ENCODE measurements at regions of chr7 and their contacts with region 1.

Region 1: GRCh38 chr7:7681179-7681935 is 37.0 kb downstream of the RPA3 start:
- DNase-seq: peak in 1 of 2 experiments; percentile 55
- H3K4me3 ChIP-seq: no peak overlapping the region
- H3K4me3 Mint-ChIP-seq: no peak overlapping the region
- H3K27ac Mint-ChIP-seq: no peak overlapping the region
- H3K4me1 ChIP-seq: no peaks in the 10 kb centered on the region
- H3K4me1 Mint-ChIP-seq: no peaks in the 10 kb centered on the region
- H3K27me3 ChIP-seq: no peaks in the 10 kb centered on the region
- H3K27me3 Mint-ChIP-seq: no peaks in the 10 kb centered on the region
- CTCF ChIP-seq: peak; percentile 50 to 62

Region 2: GRCh38 chr7:7595451-7595850 is 85.9 kb before region 1 on chr7:
- CTCF ChIA-PET with region 1: no interaction called
- POLR2A ChIA-PET with region 1: no interaction called
- intact Hi-C with region 1: no loop called
- DNase-seq: no peak
- H3K4me3 ChIP-seq: no peak overlapping the region
- H3K4me3 Mint-ChIP-seq: no peak overlapping the region
- H3K27ac Mint-ChIP-seq: no peak overlapping the region
- H3K4me1 ChIP-seq: no peaks in the 10 kb centered on the region
- H3K4me1 Mint-ChIP-seq: no peaks in the 10 kb centered on the region
- H3K27me3 ChIP-seq: no peaks in the 10 kb centered on the region
- H3K27me3 Mint-ChIP-seq: no peaks in the 10 kb centered on the region
- CTCF ChIP-seq: peak in 1 of 2 experiments; percentile 7

Region 3: GRCh38 chr7:7696458-7697119 is 15.2 kb after region 1 on chr7:
- CTCF ChIA-PET with region 1: no interaction called
- POLR2A ChIA-PET with region 1: no interaction called
- intact Hi-C with region 1: no loop called
- DNase-seq: no peak
- H3K4me3 ChIP-seq: no peak overlapping the region
- H3K4me3 Mint-ChIP-seq: no peak overlapping the region
- H3K27ac Mint-ChIP-seq: no peak overlapping the region
- H3K4me1 ChIP-seq: peaks cover 9% of the 10 kb centered on the region; the same call in 1 of the 2 replicates
- H3K4me1 Mint-ChIP-seq: peaks cover 6% of the 10 kb centered on the region
- H3K27me3 ChIP-seq: no peaks in the 10 kb centered on the region
- H3K27me3 Mint-ChIP-seq: no peaks in the 10 kb centered on the region
- CTCF ChIP-seq: no peak

Region 4: GRCh38 chr7:7732566-7733290 is 51.4 kb after region 1 on chr7:
- CTCF ChIA-PET with region 1: no interaction called
- POLR2A ChIA-PET with region 1: no interaction called
- intact Hi-C with region 1: loop called (anchors 5 kb)
- DNase-seq: no peak
- H3K4me3 ChIP-seq: no peak overlapping the region
- H3K4me3 Mint-ChIP-seq: no peak overlapping the region
- H3K27ac Mint-ChIP-seq: no peak overlapping the region
- H3K4me1 ChIP-seq: peaks cover 25% of the 10 kb centered on the region
- H3K4me1 Mint-ChIP-seq: peaks cover 7% of the 10 kb centered on the region
- H3K27me3 ChIP-seq: no peaks in the 10 kb centered on the region
- H3K27me3 Mint-ChIP-seq: no peaks in the 10 kb centered on the region
- CTCF ChIP-seq: no peak

Region 5: GRCh38 chr7:7761340-7761980 is 80.1 kb after region 1 on chr7:
- CTCF ChIA-PET with region 1: no interaction called
- POLR2A ChIA-PET with region 1: no interaction called
- intact Hi-C with region 1: loop called (anchors 1 kb)
- DNase-seq: peak in 1 of 2 experiments; percentile 10
- H3K4me3 ChIP-seq: no peak overlapping the region
- H3K4me3 Mint-ChIP-seq: no peak overlapping the region
- H3K27ac Mint-ChIP-seq: no peak overlapping the region
- H3K4me1 ChIP-seq: peaks cover 33% of the 10 kb centered on the region
- H3K4me1 Mint-ChIP-seq: peaks cover 32% of the 10 kb centered on the region
- H3K27me3 ChIP-seq: no peaks in the 10 kb centered on the region
- H3K27me3 Mint-ChIP-seq: no peaks in the 10 kb centered on the region
- CTCF ChIP-seq: peak; percentile 6 to 35

Region 6: DNA sequence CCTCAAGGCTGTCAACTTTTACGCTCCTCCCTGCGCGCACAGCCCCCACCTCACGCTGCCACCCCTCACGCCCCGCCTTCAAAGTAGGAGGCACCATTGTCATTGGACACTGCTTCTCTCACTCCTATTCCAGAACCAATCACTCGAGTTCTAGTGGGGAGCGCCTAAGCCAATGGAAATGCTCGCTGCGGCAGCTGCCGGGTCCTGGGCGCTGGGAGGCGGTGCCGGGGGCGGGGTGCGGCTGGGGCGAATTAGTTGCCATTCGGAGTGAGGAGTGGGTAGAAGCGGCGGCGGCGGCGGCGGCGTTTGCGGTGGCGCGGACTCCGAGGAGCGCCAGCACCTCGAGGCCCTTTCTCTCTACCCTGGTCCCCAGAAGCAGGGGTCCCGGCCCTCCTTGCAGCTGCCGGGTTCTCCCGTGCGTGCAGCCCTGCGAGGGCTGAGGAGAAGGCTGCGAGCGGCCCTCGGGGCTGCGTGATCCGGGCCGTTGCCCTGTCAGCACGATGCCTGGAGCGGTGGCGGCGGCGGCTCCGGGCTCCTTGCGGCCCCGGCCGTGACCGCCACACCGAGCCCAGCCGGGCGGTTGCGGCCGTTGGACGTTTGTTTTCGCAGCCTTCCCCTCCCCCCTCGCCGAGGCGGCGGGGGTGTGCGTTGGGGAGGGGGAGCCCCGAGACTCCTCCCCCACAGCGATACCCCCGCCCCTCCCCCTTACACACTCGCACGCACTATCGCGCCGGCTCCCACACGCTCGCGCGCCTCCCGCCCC is 287.4 kb after region 1 on chr7 and contains the start of gene GLCCI1:
- CTCF ChIA-PET with region 1: interaction called, 3 read pairs
- POLR2A ChIA-PET with region 1: no interaction called
- intact Hi-C with region 1: loop called (anchors 5 kb)
- DNase-seq: peak; percentile 98
- H3K4me3 ChIP-seq: peak within 1 kb of the TSS; percentile 82
- H3K4me3 Mint-ChIP-seq: peak within 1 kb of the TSS; percentile 27
- H3K27ac Mint-ChIP-seq: peak within 1 kb of the TSS; percentile 31
- H3K4me1 ChIP-seq: no peaks in the 10 kb centered on the region
- H3K4me1 Mint-ChIP-seq: peaks cover 6% of the 10 kb centered on the region
- H3K27me3 ChIP-seq: no peaks in the 10 kb centered on the region
- H3K27me3 Mint-ChIP-seq: no peaks in the 10 kb centered on the region
- CTCF ChIP-seq: no peak
- total RNA-seq, gene GLCCI1: 18.8 and 19.3 TPM in 2 replicates

Region 7: GRCh38 chr7:8035647-8036518 is 354.5 kb after region 1 on chr7:
- CTCF ChIA-PET with region 1: interaction called, 17 read pairs
- POLR2A ChIA-PET with region 1: no interaction called
- intact Hi-C with region 1: loop called (anchors 1 kb)
- DNase-seq: peak in 1 of 2 experiments; percentile 21
- H3K4me3 ChIP-seq: no peak overlapping the region
- H3K4me3 Mint-ChIP-seq: no peak overlapping the region
- H3K27ac Mint-ChIP-seq: no peak overlapping the region
- H3K4me1 ChIP-seq: no peaks in the 10 kb centered on the region
- H3K4me1 Mint-ChIP-seq: no peaks in the 10 kb centered on the region
- H3K27me3 ChIP-seq: no peaks in the 10 kb centered on the region
- H3K27me3 Mint-ChIP-seq: no peaks in the 10 kb centered on the region
- CTCF ChIP-seq: peak; percentile 23 to 76

Region 8: DNA sequence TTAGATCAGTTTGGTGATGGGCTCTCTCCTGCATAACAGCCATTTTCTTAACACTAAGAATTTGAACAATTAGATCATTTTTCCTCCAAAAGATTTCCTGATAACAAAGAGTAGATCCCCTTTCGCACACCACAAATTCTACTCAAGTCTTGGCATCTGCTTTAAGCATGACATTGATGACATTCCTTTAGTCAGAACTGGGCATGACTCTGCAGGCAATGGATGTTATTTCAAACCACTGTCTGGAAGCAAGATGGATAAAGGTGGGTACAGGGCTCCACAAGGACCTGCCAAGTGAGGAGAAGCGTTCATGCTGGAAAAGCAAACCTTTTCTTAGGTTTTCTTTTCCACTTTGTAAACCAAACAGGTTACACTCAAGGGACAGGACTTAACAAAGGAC is 410.8 kb after region 1 on chr7:
- CTCF ChIA-PET with region 1: no interaction called
- POLR2A ChIA-PET with region 1: no interaction called
- intact Hi-C with region 1: loop called (anchors 2 kb)
- DNase-seq: no peak
- H3K4me3 ChIP-seq: no peak overlapping the region
- H3K4me3 Mint-ChIP-seq: no peak overlapping the region
- H3K27ac Mint-ChIP-seq: no peak overlapping the region
- H3K4me1 ChIP-seq: peaks cover 8% of the 10 kb centered on the region; the same call in 1 of the 2 replicates
- H3K4me1 Mint-ChIP-seq: no peaks in the 10 kb centered on the region
- H3K27me3 ChIP-seq: no peaks in the 10 kb centered on the region
- H3K27me3 Mint-ChIP-seq: no peaks in the 10 kb centered on the region
- CTCF ChIP-seq: no peak

Region 9: GRCh38 chr7:8217200-8218068 is 536.1 kb after region 1 on chr7:
- CTCF ChIA-PET with region 1: no interaction called
- POLR2A ChIA-PET with region 1: no interaction called
- intact Hi-C with region 1: loop called (anchors 1 kb)
- DNase-seq: peak in 1 of 2 experiments; percentile 59
- H3K4me3 ChIP-seq: no peak overlapping the region
- H3K4me3 Mint-ChIP-seq: no peak overlapping the region
- H3K27ac Mint-ChIP-seq: no peak overlapping the region
- H3K4me1 ChIP-seq: no peaks in the 10 kb centered on the region
- H3K4me1 Mint-ChIP-seq: peaks cover 4% of the 10 kb centered on the region
- H3K27me3 ChIP-seq: no peaks in the 10 kb centered on the region
- H3K27me3 Mint-ChIP-seq: no peaks in the 10 kb centered on the region
- CTCF ChIP-seq: peak; percentile 52 to 75